ENCODE measurements at regions of chr12 and their contacts with region 1.

Region 1: GRCh38 chr12:12327802-12328201 is 22.2 kb downstream of the MANSC1 start:
- DNase-seq: peak; percentile 27
- H3K4me3 Mint-ChIP-seq: no peak overlapping the region
- H3K27ac Mint-ChIP-seq: peak overlapping the region; percentile 36
- H3K4me1 Mint-ChIP-seq: peaks cover 6% of the 10 kb centered on the region
- H3K27me3 Mint-ChIP-seq: no peaks in the 10 kb centered on the region

Region 2: GRCh38 chr12:11553871-11554533 is 773.8 kb before region 1 on chr12:
- CTCF ChIA-PET with region 1: interaction called, 3 read pairs
- intact Hi-C with region 1: loop called (anchors 1 kb)
- DNase-seq: peak; percentile 79
- H3K4me3 Mint-ChIP-seq: no peak overlapping the region
- H3K27ac Mint-ChIP-seq: no peak overlapping the region
- H3K4me1 Mint-ChIP-seq: peaks cover 22% of the 10 kb centered on the region
- H3K27me3 Mint-ChIP-seq: no peaks in the 10 kb centered on the region

Region 3: DNA sequence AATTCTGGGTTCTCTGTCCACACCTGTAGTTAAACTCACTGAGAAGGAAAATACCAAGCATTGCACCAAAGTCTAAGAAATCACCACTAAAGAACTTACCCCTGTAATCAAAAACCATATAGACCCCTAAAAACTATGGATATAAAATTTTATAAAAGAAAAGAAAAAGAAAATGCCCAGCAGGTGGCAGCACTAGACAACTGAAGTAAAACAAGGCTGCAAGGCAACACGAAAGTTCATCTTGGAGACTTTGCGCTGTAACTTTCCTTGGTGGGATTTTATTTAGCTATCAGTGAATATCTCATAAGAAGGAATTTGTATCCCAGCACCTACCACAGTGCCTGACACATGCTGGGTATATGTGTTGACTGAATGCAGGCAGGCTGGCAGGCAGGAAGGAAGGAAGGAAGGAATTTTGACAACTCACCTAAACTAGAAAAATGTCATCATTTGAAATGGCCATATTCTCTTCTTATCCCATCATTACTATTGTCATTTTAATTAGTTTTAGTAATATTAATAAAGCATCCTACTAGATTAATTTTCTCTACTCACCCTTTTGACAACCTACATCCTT is 746.5 kb before region 1 on chr12:
- CTCF ChIA-PET with region 1: interaction called, 8 read pairs
- intact Hi-C with region 1: loop called (anchors 1 kb)
- DNase-seq: peak; percentile 84
- H3K4me3 Mint-ChIP-seq: no peak overlapping the region
- H3K27ac Mint-ChIP-seq: no peak overlapping the region
- H3K4me1 Mint-ChIP-seq: peaks cover 18% of the 10 kb centered on the region
- H3K27me3 Mint-ChIP-seq: peaks cover 6% of the 10 kb centered on the region

Region 4: DNA sequence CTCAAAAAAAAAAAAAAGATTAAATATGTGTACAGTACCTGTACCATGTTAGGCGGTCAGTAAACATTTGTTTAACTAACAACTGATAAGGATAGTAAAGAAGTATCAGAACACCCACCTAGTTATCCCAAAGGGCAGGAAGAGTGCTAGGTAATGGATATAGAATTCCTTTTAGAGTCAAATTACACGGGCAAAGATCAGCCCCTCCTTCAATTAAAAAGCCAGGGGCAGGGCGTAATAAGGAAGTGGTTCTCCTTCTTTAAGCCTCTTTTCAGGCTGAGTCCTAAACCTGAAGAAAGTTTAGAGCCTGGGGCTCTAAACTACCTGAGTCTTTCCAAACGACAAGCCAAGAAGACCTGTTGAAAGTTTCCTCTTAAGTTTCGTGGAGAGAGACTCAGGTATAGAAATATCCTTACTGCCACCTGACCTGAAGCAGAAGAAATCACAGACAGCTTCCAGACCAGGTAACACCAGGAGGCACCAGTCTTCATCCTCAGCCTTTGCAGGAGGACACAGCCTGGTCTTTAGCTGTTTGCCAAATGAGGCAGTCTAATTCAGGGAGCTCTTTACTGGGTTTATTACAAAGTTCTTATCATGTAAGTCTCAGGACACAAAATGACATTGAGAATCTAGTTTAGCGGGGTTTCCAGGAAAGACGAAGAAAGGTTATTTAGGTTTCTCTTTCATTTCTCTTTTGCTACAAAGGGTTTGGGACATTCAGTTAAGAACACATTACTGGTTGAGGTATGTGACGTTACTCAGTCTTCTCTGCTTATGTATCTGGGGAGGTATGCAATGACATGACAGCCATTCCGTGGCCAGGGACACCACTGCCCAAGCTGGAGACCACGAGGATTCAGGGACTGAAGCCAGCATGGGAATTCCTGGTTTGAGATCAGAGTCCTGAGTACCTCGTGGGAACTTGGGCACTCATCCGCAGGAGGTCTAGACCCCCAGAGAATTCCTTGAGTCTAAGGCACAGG is 256.8 kb before region 1 on chr12 and contains the start of gene BCL2L14:
- CTCF ChIA-PET with region 1: interaction called, 8 read pairs
- intact Hi-C with region 1: loop called (anchors 5 kb)
- DNase-seq: peak; percentile 52
- H3K4me3 Mint-ChIP-seq: peak within 1 kb of the TSS; percentile 85
- H3K27ac Mint-ChIP-seq: peak within 1 kb of the TSS; percentile 90
- H3K4me1 Mint-ChIP-seq: peaks cover 36% of the 10 kb centered on the region
- H3K27me3 Mint-ChIP-seq: no peaks in the 10 kb centered on the region
- total RNA-seq, gene BCL2L14: 19.4 to 21.8 TPM

Region 5: GRCh38 chr12:12081836-12082497 is 245.8 kb before region 1 on chr12:
- CTCF ChIA-PET with region 1: interaction called, 17 read pairs
- intact Hi-C with region 1: loop called (anchors 1 kb)
- DNase-seq: peak; percentile 9
- H3K4me3 Mint-ChIP-seq: no peak overlapping the region
- H3K27ac Mint-ChIP-seq: no peak overlapping the region
- H3K4me1 Mint-ChIP-seq: peaks cover 4% of the 10 kb centered on the region
- H3K27me3 Mint-ChIP-seq: no peaks in the 10 kb centered on the region

Region 6: GRCh38 chr12:12214635-12215131 is 113.1 kb before region 1 on chr12:
- CTCF ChIA-PET with region 1: no interaction called
- intact Hi-C with region 1: loop called (anchors 5 kb)
- DNase-seq: peak; percentile 9
- H3K4me3 Mint-ChIP-seq: no peak overlapping the region
- H3K27ac Mint-ChIP-seq: no peak overlapping the region
- H3K4me1 Mint-ChIP-seq: peaks cover 25% of the 10 kb centered on the region
- H3K27me3 Mint-ChIP-seq: no peaks in the 10 kb centered on the region

Region 7: DNA sequence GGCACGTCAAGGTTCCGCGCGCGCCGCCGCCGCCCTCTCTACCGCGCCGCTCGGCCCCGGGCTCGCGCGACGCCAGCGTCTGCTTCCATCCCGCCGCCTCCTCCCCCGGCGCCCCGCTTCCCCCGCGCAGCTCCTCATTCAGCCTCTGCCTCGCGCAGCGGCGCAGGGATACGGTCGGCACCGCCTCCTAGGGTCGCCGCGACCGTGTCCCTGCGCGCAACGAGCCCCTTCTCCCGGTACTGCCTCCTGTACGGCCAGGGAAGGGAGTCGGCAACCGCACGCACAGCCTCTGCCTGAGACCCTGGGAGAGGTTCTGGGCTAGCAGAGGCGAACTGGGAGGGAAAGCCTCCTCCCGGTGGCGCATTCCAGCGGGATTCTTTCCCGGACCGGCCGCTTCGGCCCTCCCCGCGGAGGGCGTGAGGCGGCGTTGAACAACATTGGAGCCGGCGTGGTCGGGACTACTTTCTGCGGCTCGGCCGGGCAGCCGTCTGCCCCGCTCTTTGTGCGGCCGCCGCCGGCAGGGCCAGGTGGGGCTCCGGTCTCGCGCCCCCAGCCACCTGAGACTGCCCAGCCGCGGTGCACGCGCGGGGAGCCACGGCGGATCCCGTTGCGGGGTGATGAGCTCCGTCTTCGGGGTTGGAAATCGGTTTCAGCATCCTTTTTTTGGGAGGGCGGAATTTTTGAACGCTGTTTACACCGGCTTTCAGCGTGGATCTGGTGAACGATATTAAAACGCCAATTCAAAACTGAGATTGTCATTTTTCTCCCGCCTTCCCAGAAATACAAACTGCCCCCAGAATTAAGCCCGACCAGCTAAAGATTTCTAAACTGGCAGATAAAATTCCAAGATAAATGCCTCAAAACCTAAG is 60.7 kb before region 1 on chr12 and contains the start of gene LRP6:
- CTCF ChIA-PET with region 1: interaction called, 12 read pairs
- intact Hi-C with region 1: loop called (anchors 2 kb)
- DNase-seq: peak; percentile 81
- H3K4me3 Mint-ChIP-seq: peak within 1 kb of the TSS; percentile 83
- H3K27ac Mint-ChIP-seq: no peak within 1 kb of the TSS
- H3K4me1 Mint-ChIP-seq: peaks cover 18% of the 10 kb centered on the region
- H3K27me3 Mint-ChIP-seq: no peaks in the 10 kb centered on the region
- total RNA-seq, gene LRP6: 3.9 to 4.1 TPM

Region 8: GRCh38 chr12:12533238-12533829 is 205.5 kb after region 1 on chr12:
- CTCF ChIA-PET with region 1: no interaction called
- intact Hi-C with region 1: no loop called
- DNase-seq: no peak
- H3K4me3 Mint-ChIP-seq: no peak overlapping the region
- H3K27ac Mint-ChIP-seq: peak overlapping the region; percentile 85
- H3K4me1 Mint-ChIP-seq: peaks cover 50% of the 10 kb centered on the region
- H3K27me3 Mint-ChIP-seq: no peaks in the 10 kb centered on the region

Region 9: GRCh38 chr12:13085968-13086686 is 758.3 kb after region 1 on chr12:
- CTCF ChIA-PET with region 1: no interaction called
- intact Hi-C with region 1: no loop called
- DNase-seq: no peak
- H3K4me3 Mint-ChIP-seq: no peak overlapping the region
- H3K27ac Mint-ChIP-seq: no peak overlapping the region
- H3K4me1 Mint-ChIP-seq: peaks cover 8% of the 10 kb centered on the region
- H3K27me3 Mint-ChIP-seq: no peaks in the 10 kb centered on the region

Measured in activated naive CD4-positive, alpha-beta T cell treated with anti-CD3 and anti-CD28 coated beads for 36 hours (primary cell).